GM10248 (cell line): ENCODE measurements at regions of chr3 and their contacts with region 1.

Region 1: DNA sequence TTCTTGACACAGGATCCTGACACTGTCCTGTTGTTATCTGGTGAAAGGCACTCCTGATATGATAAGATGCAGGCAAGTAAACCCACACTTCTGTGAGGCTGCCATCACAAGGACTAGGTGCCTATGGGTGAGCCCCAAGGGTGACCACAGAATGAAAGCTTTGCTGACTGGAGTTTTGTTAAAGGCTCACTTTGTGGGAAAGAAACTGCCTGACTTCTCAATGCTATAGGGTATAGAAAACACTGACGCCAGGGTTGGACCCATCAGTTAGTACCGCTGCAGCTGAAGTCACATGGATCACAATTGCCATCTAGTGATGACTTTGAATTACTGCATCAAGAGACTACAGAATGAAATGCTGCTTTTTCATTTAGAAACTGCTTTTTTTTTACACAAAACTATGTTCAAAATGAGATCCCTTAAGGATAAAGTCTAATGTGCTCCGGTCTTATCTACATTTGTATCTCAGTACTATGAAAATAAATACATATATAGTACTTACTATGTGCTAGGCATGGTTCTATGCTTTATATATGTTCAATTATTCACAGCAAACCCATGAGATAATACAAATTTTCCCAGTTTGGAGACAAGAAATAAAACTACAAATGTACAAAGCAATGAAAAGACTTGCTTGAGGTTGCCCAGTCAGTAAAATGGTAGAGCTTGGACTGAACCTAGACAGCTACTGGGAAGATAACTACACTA is 64.2 kb upstream of the CMSS1 start:
- DNase-seq: peak; percentile 34
- CTCF ChIP-seq: peak; percentile 75

Region 2: DNA sequence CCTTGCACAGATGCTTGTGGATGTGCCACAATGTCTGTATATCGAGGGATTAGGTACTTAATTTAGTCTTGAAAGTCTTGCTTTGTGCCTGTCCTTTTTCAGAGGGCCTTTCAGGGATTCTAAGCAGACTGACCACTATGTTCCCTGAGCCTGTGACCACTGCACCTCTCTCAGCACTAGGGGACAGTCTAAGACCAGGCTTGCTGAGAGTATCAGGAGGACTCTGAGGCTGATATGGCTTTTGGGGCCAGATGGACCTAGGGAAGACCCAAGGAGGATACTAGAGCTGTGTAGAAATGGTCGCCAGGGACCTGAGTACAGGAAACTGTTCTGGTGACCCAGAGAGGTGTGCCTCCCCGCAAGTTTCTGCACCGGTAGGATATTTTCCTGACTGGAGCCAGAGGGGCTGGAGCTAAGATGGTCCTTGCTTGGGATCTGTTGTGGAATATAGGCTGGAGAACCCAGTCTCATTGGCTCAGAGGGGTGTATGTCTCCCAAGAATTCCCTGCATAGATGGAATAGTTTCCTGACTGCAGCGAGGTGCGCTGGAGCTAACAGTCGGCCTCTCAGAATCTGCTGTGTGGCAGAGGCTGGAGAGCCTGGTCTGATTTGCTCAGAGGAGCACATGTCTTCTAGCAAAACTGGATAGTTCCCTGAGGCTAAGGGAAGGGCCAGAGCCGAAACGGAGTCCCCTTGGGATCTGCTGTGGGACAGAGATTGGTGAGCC is 638.7 kb before region 1 on chr3:
- CTCF ChIA-PET with region 1: interaction called, 29 read pairs
- POLR2A ChIA-PET with region 1: no interaction called
- DNase-seq: no peak
- CTCF ChIP-seq: peak; percentile 65

Region 3: DNA sequence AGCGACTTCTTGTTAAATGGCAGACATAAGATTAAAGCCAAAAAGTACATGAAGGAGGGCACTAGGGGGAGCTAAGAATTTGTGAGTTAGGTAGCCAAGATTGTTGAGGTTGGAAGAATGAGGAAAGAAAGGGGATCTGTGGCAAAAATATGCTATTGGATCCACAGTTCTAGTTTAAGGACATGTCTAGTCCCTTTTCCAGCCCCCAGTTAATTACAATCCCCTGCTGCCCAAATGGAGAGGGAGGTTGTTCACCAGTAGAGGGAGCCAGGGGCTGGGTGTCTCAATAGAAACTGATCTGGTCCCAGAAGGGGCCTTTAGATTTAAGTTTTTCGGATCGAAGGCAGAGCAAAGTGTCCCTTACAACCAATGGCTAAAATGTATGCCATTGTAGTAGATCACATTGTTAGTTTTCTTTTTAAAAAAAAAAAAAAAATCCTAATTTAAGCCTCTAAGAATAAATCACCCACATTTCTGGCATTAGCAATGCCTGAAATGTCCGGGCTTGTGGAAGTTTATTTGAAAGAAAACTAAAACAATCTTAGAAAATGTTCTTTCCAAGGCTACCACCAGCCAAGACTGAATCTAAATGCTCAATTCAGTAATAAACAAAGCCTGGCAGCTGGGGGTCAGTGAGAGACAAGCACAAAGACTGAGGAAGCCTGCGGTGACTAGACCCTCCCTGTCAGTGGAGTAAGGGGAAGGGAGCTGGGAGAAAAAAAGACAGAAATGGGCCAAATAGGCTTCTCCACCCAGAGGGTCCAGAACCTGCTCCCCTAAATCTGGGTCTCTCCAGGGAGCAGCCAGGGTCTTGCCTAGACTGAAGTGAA is 107.9 kb before region 1 on chr3:
- CTCF ChIA-PET with region 1: interaction called, 12 read pairs
- POLR2A ChIA-PET with region 1: no interaction called
- DNase-seq: no peak
- CTCF ChIP-seq: peak; percentile 30

Region 4: GRCh38 chr3:99765042-99765942 is 11.9 kb after region 1 on chr3:
- CTCF ChIA-PET with region 1: interaction called, 17 read pairs
- POLR2A ChIA-PET with region 1: no interaction called
- DNase-seq: no peak
- CTCF ChIP-seq: no peak